Heart right ventricle (tissue), 16 donors: ENCODE measurements at regions of chr15 and their contacts with region 1.

Region 1: DNA sequence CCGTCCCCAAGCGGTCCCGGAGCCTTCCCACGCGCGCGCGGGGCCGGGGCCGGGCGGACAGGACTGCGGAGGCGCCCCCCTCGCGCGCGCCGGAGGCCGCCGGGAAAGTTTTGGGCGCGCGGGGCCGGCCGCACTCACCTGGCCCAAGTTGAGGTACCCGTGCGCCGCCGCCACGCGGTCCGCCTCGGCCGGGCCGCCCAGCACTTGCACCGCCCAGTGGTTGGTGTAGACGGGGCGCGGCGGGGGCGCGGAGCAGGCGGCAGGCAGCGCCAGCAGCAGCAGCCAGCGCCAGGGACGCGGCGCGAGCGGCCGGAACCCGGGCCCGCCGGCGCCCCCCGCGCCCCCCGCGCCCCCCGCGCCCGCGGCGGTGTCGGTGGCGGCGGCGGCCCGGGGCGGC is 273 bp downstream of the PCSK6 start:
- DNase-seq: peak in 1 of 2 donors; percentile 57
- ATAC-seq: peak in 4 of 8 donors; percentile 38 to 59 (median 45)
- H3K4me3 ChIP-seq: peak overlapping the region in 9 of 10 donors; percentile 40 to 53 (median 47)
- H3K27ac ChIP-seq: peak overlapping the region in 2 of 10 donors; percentile 54 to 63
- H3K4me1 ChIP-seq: peaks cover 0 to 29% (median 3%) of the 10 kb centered on the region in 9 donors
- H3K27me3 ChIP-seq: peaks cover 0 to 59% (median 11%) of the 10 kb centered on the region in 7 donors
- CTCF ChIP-seq: peak in 1 of 9 donors; percentile 13

Region 2: GRCh38 chr15:101307048-101307896 is 182.0 kb before region 1 on chr15:
- intact Hi-C with region 1: loop called in 3 of 10 experiments (anchors 5 to 10 kb)
- DNase-seq: no peak
- ATAC-seq: peak in 2 of 8 donors; percentile 23 to 24
- H3K4me3 ChIP-seq: no peak overlapping the region
- H3K27ac ChIP-seq: no peak overlapping the region
- H3K4me1 ChIP-seq: no peaks in the 10 kb centered on the region
- H3K27me3 ChIP-seq: no peaks in the 10 kb centered on the region
- CTCF ChIP-seq: no peak

Region 3: DNA sequence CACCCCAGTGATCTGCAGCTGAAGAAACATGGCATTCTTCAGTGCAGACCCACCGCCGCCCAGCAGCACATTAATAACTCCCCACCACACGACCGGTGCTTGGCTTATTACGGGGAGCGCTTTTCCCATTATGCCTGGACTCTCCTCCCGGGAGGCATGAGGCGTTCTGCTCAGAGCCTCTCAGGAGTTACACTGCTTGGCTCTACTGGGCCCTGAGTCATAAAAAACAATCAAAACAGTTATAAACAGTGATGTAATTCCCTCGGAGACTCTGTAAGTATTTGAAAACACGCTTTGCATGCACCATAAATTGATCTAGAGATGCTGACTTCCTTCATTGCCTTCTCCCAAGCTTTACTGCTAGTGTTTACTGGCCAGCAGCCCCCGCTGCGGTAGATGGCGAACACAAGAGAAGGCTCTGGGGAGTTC is 117.1 kb before region 1 on chr15:
- intact Hi-C with region 1: loop called in 2 of 10 experiments (anchors 10 kb)
- DNase-seq: no peak
- ATAC-seq: peak in 1 of 8 donors; percentile 51
- H3K4me3 ChIP-seq: no peak overlapping the region
- H3K27ac ChIP-seq: no peak overlapping the region
- H3K4me1 ChIP-seq: peaks cover 0 to 24% (median 5%) of the 10 kb centered on the region in 9 donors
- H3K27me3 ChIP-seq: no peaks in the 10 kb centered on the region
- CTCF ChIP-seq: no peak

Region 4: DNA sequence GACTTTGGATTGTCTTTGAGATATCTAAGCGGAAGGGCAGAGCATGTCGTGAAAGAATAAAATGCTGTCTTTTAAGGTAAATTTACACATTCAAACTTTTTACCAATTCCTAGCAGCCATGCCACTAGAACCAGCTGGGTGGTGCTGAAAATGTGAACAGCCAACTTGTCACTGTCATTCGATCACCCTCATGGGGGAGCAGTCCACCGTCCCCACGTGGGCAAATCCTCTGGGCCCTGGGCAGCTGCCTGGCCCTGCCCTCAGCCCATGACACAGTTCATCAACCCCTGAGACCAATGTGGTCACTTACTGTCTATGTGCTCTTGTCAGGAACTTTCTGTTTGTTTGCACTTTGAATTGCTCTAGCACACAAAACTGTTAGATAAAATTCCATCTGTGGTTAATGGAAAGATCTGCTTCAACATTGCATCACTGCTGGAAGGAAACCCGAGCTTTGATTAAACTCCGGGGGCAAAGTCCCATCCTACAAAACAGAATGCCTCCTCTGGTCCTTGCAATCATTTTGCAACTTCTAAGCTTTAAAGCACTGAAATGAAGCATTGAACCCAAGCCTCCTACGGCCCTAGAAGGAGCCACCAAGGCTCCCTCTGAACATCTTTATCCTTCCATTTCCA is 49.8 kb before region 1 on chr15:
- intact Hi-C with region 1: loop called in 1 of 10 experiments (anchors 5 kb)
- DNase-seq: no peak
- ATAC-seq: peak; percentile 24 to 72 (median 36)
- H3K4me3 ChIP-seq: peak overlapping the region in 4 of 10 donors; percentile 6 to 39 (median 20)
- H3K27ac ChIP-seq: peak overlapping the region in 9 of 10 donors; percentile 2 to 70 (median 58)
- H3K4me1 ChIP-seq: peaks cover 0 to 51% (median 10%) of the 10 kb centered on the region in 9 donors
- H3K27me3 ChIP-seq: no peaks in the 10 kb centered on the region
- CTCF ChIP-seq: no peak

Region 5: DNA sequence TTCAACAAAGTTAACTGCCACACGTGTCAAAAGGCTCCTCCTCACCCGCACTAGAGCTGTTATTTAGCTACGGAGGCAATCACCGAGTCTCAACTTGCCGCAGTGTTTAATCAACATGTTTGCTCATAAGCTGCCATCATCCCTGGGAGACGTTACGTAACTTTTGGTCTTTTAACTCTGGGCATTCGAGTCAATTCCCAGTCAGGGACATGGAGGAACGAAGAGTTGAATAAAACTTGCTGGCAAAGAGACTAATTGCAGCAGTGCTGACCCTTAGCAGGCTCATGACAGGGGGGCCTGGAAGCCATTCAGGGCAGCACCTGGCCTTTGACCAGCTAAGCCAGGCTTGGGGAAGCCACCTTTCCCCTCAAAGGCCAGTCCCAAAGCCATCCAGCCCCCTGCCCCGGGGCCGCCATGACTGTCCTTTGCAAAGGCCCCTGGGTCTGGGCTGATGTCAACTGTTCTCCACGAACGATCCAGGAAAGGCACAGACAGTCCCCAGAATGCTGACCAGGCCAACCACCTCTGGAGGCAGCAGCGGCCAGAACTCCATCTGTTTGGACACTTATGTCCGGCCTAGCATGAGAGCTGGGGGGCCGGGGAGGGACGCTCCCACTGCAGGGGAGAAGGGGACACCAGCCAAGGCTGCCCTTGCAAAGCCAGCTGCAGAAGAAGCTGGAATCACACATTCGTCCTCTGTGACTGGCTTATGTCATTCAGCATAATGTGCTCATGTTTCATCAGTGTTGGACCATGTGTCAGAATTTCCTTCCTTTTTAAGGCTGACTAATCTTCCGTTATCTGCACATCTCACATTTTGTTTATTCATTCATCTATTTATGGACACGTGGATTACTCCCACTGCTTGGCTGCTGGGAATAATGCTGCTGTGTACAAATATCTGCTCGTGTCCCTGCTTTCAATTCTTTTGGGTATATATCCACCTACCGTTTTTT is 43.4 kb before region 1 on chr15:
- intact Hi-C with region 1: loop called in 1 of 10 experiments (anchors 2 kb)
- DNase-seq: peak; percentile 69 to 72
- ATAC-seq: peak; percentile 71 to 87 (median 82)
- H3K4me3 ChIP-seq: no peak overlapping the region
- H3K27ac ChIP-seq: peak overlapping the region; percentile 48 to 85 (median 68)
- H3K4me1 ChIP-seq: peaks cover 7 to 53% (median 32%) of the 10 kb centered on the region in 9 donors
- H3K27me3 ChIP-seq: no peaks in the 10 kb centered on the region
- CTCF ChIP-seq: peak in 1 of 9 donors; percentile 20

Region 6: GRCh38 chr15:101568309-101568708 is 79.1 kb after region 1 on chr15:
- intact Hi-C with region 1: no loop called
- DNase-seq: no peak
- ATAC-seq: no peak
- H3K4me3 ChIP-seq: no peak overlapping the region
- H3K27ac ChIP-seq: no peak overlapping the region
- H3K4me1 ChIP-seq: no peaks in the 10 kb centered on the region
- H3K27me3 ChIP-seq: peaks cover 0 to 11% (median 0%) of the 10 kb centered on the region in 7 donors
- CTCF ChIP-seq: no peak